Heart right ventricle (tissue), 16 donors: ENCODE measurements at regions of chr2 and their contacts with region 1.

Region 1: DNA sequence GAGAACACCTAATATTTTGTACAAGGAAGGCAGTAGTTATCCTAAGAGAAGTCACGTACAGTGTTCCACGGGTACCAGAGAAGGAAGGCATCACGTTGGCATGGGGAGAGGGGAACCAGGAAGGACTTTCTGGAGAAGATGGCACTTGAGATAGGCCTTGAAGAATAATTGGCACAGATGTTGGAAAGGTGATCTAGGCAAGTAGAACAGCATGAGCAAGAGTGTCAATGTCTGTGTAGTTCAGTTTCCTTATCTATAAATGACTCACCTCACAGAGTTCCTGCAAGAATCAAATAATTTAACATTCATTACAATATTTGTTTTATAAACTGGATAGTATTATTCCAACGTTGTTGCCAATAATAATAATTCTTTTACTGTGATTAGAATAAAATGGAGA is 48.3 kb upstream of the BZW1 start:
- DNase-seq: no peak
- ATAC-seq: no peak
- H3K4me3 ChIP-seq: no peak overlapping the region
- H3K27ac ChIP-seq: no peak overlapping the region
- H3K4me1 ChIP-seq: peaks cover 0 to 24% (median 14%) of the 10 kb centered on the region in 9 donors
- H3K27me3 ChIP-seq: no peaks in the 10 kb centered on the region
- CTCF ChIP-seq: no peak

Region 2: DNA sequence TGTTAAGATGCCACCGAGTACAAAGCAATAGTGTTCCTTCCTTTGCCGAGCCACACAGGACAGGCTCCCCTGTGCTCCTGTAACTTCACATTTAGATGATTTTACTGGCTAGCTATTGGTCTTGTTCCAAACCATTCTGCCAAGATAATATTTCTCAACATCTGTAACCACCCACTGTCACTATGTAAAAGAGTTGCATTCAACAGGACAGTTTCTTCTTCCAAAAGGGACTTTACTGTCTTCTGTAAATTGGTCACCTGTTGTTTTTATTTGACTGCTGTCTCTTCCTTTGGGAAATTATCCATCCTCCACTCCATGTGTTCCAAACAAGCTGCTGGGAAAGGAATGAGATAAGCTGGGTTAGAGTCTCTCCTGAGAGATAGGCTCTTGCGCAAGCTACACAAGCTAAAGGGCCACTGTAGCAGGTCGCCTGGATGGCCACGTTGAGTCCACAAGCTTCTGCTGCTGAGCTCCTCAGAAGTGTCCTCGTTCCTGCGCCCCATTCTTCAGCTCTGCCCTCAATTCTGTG is 33.9 kb after region 1 on chr2:
- intact Hi-C with region 1: loop called in 1 of 10 experiments (anchors 2 kb)
- DNase-seq: peak; percentile 13 to 23
- ATAC-seq: peak; percentile 57 to 84 (median 82)
- H3K4me3 ChIP-seq: no peak overlapping the region
- H3K27ac ChIP-seq: peak overlapping the region in 6 of 10 donors; percentile 14 to 58 (median 56)
- H3K4me1 ChIP-seq: peaks cover 0 to 22% (median 0%) of the 10 kb centered on the region in 9 donors
- H3K27me3 ChIP-seq: no peaks in the 10 kb centered on the region
- CTCF ChIP-seq: no peak